GM10248 (cell line): ENCODE measurements at regions of chr15 and their contacts with region 1.

Region 1: GRCh38 chr15:60520825-60521368 is 42.0 kb upstream of the ICE2 start:
- DNase-seq: peak; percentile 60
- CTCF ChIP-seq: peak; percentile 85

Region 2: DNA sequence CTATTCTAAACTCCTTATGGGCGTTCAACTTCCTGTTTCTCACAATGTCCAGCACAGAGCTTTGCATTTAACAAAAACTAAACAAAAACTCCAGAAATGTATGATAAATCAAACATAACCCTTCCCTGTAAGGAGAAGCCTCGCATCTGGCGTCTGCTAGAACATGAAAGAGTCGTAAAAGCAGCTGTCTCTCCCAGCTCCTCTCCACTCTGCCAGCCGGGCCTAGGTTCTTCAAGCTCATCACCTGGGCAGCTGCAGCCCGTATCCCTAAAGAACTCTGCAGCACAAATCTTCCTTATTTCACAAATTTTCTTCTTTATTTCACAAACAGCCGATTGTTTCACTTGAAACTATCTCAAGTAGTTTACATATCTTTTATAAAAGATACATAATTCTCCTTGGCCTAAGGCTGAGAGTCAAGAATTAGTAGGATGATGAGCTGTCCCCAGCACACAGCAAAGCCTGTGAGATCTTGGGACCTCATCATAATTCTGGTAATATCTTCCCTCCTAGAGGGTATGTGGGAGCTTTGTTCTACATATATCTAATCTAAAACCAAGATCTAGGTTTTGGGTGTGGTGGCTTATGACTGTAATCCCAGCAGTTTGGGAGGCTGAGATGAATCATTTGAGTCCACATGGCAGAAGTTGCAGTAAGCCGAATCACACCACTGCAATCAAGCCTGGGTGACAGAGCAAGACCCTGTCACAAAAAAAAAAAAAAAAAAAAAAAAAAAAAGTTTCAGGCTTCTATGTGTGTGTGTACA is 158.4 kb before region 1 on chr15:
- CTCF ChIA-PET with region 1: interaction called, 109 read pairs
- POLR2A ChIA-PET with region 1: no interaction called
- DNase-seq: no peak
- CTCF ChIP-seq: no peak

Region 3: DNA sequence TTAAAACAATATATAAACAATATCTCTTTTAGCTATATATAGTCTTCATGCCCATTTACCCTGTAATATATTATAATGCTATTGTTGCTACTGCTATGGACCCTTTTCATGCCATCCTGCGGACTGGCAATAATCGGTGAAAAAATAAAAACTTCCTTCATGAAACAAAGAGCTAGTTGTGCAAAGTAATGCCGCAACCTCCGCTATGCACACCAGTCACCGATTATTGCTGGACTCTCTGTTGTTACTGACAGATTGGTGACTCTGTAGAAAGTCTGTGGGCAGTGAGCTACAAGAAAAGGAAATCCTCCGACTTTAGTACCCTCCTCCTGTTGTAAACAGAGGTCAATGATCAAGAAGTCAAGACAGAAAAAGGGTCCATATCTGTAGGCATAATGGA is 24.0 kb before region 1 on chr15:
- CTCF ChIA-PET with region 1: interaction called, 27 read pairs
- POLR2A ChIA-PET with region 1: no interaction called
- DNase-seq: no peak
- CTCF ChIP-seq: no peak

Region 4: DNA sequence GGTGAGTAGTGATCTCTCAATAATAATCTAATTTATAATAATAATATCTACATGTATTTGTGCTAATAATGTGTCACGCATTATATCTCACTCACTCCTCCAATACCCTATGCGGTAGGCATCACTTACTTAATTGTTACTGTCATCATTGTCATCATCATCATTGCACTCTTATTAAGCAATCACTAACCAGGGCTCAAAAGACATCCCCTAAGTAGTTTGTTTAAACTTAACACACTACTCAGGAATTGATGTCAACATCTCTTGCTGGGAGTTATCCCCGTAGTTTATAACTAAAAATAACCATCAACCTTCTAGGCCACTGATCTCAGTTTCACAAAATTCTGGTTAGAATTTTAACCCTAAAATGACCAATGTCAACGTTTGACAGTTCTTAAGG is 14.8 kb after region 1 on chr15:
- CTCF ChIA-PET with region 1: interaction called, 36 read pairs
- POLR2A ChIA-PET with region 1: no interaction called
- DNase-seq: no peak
- CTCF ChIP-seq: no peak

Region 5: GRCh38 chr15:60546744-60547143 is 25.8 kb after region 1 on chr15:
- CTCF ChIA-PET with region 1: interaction called, 38 read pairs
- POLR2A ChIA-PET with region 1: no interaction called
- DNase-seq: no peak
- CTCF ChIP-seq: no peak

Region 6: DNA sequence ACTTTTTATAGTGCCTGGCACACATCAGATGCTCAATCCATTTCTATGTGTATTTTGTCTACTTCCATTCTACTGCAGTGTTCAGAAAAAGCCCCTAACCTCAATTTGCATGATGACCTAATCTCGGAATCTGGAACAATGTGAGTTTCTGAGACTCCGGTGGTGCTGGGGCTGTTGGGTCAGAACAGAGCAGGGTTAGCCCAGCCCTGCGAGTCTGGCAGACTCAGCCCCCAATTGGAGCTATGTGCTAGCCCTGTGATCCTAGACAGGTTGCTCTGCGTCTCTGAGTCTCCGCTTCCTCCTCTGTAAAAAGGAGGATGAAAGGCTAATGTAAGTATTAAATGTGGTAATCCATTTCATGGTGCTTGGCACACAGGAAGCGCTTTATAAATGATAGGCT is 53.0 kb after region 1 on chr15:
- CTCF ChIA-PET with region 1: interaction called, 17 read pairs
- POLR2A ChIA-PET with region 1: no interaction called
- DNase-seq: no peak
- CTCF ChIP-seq: no peak

Region 7: GRCh38 chr15:61857169-61857829 is 1336.4 kb after region 1 on chr15:
- CTCF ChIA-PET with region 1: no interaction called
- POLR2A ChIA-PET with region 1: no interaction called
- DNase-seq: no peak
- CTCF ChIP-seq: no peak